ENCODE measurements at regions of chr4 and their contacts with region 1.

Region 1: DNA sequence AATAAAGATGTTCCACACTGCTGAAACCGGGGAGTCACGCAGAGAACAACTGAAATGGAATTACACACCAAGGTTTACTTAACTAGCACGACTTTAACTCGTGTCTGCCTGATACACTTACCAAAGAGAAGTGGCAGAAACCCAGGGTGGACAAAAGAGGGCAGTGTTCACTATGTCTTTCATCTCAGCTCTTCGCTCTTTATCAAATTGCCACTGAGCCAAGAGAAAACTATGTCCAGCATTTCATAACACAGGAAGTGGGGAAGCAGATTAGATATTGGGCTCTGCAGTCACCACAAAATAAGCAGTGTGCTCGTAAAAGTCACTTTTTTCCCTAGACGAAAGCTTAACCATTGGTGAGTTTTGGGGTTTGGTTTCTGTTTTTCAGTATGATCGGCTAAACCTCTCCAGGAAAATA is 155.7 kb downstream of the CHIC2 start:
- DNase-seq: peak; percentile 57 to 77
- ATAC-seq: peak; percentile 91 to 97
- H3K4me3 ChIP-seq: no peak overlapping the region
- H3K27ac ChIP-seq: peak overlapping the region; percentile 50 to 70; a peak in 5 of 6 replicates
- H3K4me1 ChIP-seq: peaks cover 19% of the 10 kb centered on the region; the same call in 2 of the 3 replicates
- CTCF ChIP-seq: peak; percentile 74
- EP300 ChIP-seq: no peak
- POLR2A ChIP-seq: no peak
- RAD21 ChIP-seq: peak; percentile 82 to 83

Region 2: GRCh38 chr4:53920116-53920515 is 11.4 kb after region 1 on chr4:
- CTCF ChIA-PET with region 1: interaction called, 18 read pairs
- POLR2A ChIA-PET with region 1: no interaction called
- DNase-seq: no peak
- ATAC-seq: no peak
- H3K4me3 ChIP-seq: no peak overlapping the region
- H3K27ac ChIP-seq: no peak overlapping the region
- H3K4me1 ChIP-seq: peaks cover 3% of the 10 kb centered on the region
- CTCF ChIP-seq: no peak
- EP300 ChIP-seq: no peak
- POLR2A ChIP-seq: no peak
- RAD21 ChIP-seq: no peak

Region 3: GRCh38 chr4:54217642-54218495 is 309.2 kb after region 1 on chr4:
- CTCF ChIA-PET with region 1: interaction called, 81 read pairs
- POLR2A ChIA-PET with region 1: interaction called, 3 read pairs
- DNase-seq: peak; percentile 61 to 72
- ATAC-seq: peak; percentile 93 to 97
- H3K4me3 ChIP-seq: peak overlapping the region; percentile 45
- H3K27ac ChIP-seq: peak overlapping the region; percentile 64 to 76
- H3K4me1 ChIP-seq: 0 out of 3 replicates have a peak, but pooled peaks cover 4% of the 10 kb centered on the region
- CTCF ChIP-seq: peak; percentile 75
- EP300 ChIP-seq: no peak
- POLR2A ChIP-seq: no peak
- RAD21 ChIP-seq: peak; percentile 87 to 91

Region 4: DNA sequence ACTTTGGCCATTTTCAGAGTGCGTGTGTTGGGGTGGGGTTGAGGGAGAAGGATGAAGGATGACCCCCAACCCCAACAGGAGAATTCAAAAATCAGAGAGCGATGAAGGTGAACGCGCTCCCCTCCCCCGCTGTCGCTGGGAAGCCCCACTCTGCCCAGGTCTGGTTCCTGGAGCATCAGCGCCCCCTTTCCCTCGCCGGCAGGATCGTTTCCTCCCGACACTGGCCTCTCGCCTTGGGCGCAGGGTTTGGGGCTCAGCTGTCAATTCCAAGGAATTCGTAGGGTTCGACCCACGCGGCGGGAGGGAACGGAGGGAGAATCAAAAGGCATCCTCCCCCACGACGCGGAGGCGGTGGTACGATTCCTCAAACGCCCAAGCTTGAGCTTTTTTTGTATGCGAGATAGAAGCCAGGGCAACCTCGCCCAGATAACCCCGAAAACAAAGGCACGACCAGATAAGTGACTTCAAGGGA is 319.4 kb after region 1 on chr4:
- CTCF ChIA-PET with region 1: interaction called, 52 read pairs
- POLR2A ChIA-PET with region 1: interaction called, 3 read pairs
- DNase-seq: peak; percentile 55 to 60
- ATAC-seq: peak; percentile 72 to 81
- H3K4me3 ChIP-seq: peak overlapping the region; percentile 47
- H3K27ac ChIP-seq: peak overlapping the region; percentile 42 to 76; a peak in 5 of 6 replicates
- H3K4me1 ChIP-seq: no peaks in the 10 kb centered on the region
- CTCF ChIP-seq: peak; percentile 70
- EP300 ChIP-seq: no peak
- POLR2A ChIP-seq: no peak
- RAD21 ChIP-seq: peak; percentile 86